ENCODE measurements at regions of chr2 and their contacts with region 1.

Region 1: DNA sequence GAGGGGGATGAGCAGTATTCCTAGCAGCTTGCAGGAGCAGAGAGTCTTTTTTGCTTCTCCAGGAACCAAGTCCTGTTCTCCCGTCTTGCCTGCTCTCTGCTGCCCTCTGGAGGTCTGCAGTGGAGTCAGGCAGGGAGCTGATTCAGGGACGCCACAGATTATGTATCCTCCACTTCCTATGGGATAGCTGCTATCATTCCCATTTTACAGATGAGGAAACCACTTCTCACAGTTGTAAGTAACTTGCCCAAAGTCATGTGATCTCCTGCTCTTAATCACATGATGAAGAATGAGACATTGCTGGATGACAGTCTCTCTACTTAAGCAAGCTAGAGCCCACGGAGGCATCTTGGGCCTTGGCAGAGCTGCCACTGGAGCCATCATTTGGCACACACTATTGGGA is 8.3 kb downstream of the SLC4A5 start:
- DNase-seq: peak; percentile 81
- H3K4me3 Mint-ChIP-seq: no peak overlapping the region
- H3K27ac Mint-ChIP-seq: no peak overlapping the region
- H3K4me1 Mint-ChIP-seq: peaks cover 5% of the 10 kb centered on the region
- H3K27me3 Mint-ChIP-seq: no peaks in the 10 kb centered on the region

Region 2: DNA sequence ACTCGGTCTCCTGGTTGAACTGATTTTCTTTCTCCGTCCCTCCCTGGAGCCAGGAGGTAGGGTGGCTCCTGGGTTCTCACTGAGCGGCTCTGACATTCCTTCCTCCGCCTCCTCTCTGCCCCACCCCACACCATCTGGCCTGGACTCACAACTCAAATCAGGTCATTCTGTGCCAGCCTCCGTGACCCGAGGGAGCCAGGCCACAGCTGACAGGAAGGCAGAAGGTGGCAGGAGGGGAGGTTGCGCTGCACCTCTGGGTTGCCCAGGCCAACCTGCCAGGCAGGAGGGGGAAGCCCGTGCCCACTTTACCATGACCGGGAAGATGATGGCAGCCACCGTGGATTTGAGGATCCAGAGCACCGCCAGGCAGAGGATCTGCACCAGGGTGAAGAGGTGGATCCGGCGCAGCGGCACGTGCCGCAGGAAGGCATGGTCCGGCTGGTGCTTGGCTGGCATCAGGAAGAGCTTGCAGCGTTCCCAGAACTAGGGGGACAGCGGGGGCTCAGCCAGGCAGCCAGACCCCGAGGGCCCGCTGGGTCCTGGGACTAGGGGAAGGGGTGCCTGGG is 108.2 kb before region 1 on chr2:
- CTCF ChIA-PET with region 1: no interaction called
- POLR2A ChIA-PET with region 1: no interaction called
- intact Hi-C with region 1: no loop called
- DNase-seq: no peak
- H3K4me3 Mint-ChIP-seq: no peak overlapping the region
- H3K27ac Mint-ChIP-seq: no peak overlapping the region
- H3K4me1 Mint-ChIP-seq: peaks cover 4% of the 10 kb centered on the region
- H3K27me3 Mint-ChIP-seq: no peaks in the 10 kb centered on the region

Region 3: GRCh38 chr2:74238879-74239278 is 96.1 kb before region 1 on chr2:
- CTCF ChIA-PET with region 1: interaction called, 12 read pairs
- POLR2A ChIA-PET with region 1: no interaction called
- intact Hi-C with region 1: no loop called
- DNase-seq: no peak
- H3K4me3 Mint-ChIP-seq: no peak overlapping the region
- H3K27ac Mint-ChIP-seq: no peak overlapping the region
- H3K4me1 Mint-ChIP-seq: peaks cover 2% of the 10 kb centered on the region
- H3K27me3 Mint-ChIP-seq: no peaks in the 10 kb centered on the region

Region 4: GRCh38 chr2:74267068-74267467 is 67.9 kb before region 1 on chr2:
- CTCF ChIA-PET with region 1: interaction called, 48 read pairs
- POLR2A ChIA-PET with region 1: no interaction called
- intact Hi-C with region 1: loop called (anchors 1 kb)
- DNase-seq: peak; percentile 78
- H3K4me3 Mint-ChIP-seq: peak overlapping the region; percentile 17
- H3K27ac Mint-ChIP-seq: peak overlapping the region; percentile 52
- H3K4me1 Mint-ChIP-seq: peaks cover 9% of the 10 kb centered on the region
- H3K27me3 Mint-ChIP-seq: no peaks in the 10 kb centered on the region

Region 5: DNA sequence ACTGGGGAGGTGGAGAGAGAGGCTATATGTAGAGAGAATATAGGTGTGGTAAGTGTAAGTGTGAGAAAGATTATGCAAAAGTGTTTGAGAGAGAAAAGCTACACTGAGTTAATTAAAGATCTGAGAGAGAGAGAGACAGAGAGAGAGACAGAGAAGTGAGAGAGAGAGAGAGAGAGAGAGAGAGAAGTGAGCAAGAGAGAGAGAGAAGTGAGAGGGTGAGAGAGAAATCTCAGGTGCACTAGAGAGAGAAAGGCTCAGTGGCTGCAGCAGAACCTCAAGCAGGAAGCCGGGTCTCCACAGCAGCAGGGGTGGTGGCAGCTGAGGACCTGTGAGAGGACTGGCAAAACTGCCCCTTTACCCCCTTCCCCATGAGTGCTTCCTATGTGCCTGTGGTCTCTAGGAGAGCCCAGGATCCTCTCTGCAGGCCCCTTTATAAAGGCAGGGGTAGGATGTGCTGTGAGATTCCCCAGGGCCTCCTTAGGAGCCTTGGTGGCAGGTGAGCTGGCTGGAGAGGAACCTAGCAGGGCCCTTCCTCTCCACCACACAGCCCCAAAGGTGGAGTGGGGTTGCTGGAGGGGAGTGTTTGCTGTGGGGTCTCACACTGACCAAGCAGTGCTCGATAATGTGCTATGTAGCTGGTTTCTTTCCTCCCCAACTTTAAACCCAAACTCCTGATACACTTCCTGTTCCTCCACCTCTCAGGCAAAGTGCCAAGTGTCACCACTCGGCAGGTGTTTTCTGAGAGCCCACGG is 44.3 kb before region 1 on chr2:
- CTCF ChIA-PET with region 1: interaction called, 13 read pairs
- POLR2A ChIA-PET with region 1: no interaction called
- intact Hi-C with region 1: no loop called
- DNase-seq: peak; percentile 40
- H3K4me3 Mint-ChIP-seq: no peak overlapping the region
- H3K27ac Mint-ChIP-seq: peak overlapping the region; percentile 64
- H3K4me1 Mint-ChIP-seq: peaks cover 18% of the 10 kb centered on the region
- H3K27me3 Mint-ChIP-seq: no peaks in the 10 kb centered on the region

Region 6: GRCh38 chr2:74345272-74345943 is 10.5 kb after region 1 on chr2:
- CTCF ChIA-PET with region 1: interaction called, 30 read pairs
- POLR2A ChIA-PET with region 1: no interaction called
- intact Hi-C with region 1: no loop called
- DNase-seq: no peak
- H3K4me3 Mint-ChIP-seq: no peak overlapping the region
- H3K27ac Mint-ChIP-seq: no peak overlapping the region
- H3K4me1 Mint-ChIP-seq: no peaks in the 10 kb centered on the region
- H3K27me3 Mint-ChIP-seq: no peaks in the 10 kb centered on the region

Region 7: DNA sequence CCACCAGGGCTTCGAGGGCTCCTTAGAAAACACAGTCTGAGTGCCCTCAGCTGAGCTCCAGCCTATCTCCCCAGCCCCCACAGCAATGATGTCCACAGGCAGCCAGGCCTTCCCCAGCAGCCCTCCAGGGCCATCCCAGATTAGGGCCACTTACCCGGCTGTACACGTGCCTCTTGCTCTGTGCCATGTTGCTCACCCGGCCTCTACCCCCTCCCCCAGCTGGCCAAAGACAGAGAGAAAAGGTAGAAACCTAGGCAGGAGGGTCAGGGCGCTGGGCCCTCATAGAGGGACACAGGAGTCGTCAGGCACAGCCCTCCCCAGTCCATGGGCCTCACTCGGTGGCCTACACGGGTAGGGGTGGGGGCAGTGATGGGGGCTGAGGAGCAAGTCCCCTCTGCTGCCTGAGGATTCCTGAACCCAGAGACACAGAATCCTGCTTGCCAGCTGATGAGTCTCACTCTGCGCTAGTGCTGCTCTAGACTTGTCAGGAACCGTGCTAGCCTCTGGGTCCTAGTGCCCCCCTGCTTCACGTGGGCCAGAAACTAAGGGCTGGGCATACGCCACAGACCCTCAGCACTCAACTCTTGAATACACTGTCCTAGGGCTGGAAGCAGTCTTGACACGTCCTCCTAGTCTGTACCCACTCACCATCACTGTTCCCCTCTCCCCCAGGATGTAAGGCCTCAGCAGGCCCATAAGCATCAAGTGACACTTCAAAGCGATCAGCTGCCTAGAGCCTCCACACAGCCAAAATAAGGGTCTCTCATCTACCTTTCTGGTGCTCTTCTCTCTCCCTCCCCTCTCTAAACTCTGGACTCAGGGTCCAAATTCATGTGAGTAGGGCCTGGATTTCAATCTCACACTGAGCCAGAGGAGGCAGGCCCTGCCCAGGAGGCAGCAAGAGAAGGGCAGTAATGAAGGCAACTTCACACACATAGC is 45.2 kb after region 1 on chr2 and contains the start of gene DCTN1:
- CTCF ChIA-PET with region 1: interaction called, 11 read pairs
- POLR2A ChIA-PET with region 1: no interaction called
- intact Hi-C with region 1: no loop called
- DNase-seq: peak; percentile 23
- H3K4me3 Mint-ChIP-seq: no peak within 1 kb of the TSS
- H3K27ac Mint-ChIP-seq: no peak within 1 kb of the TSS
- H3K4me1 Mint-ChIP-seq: peaks cover 17% of the 10 kb centered on the region
- H3K27me3 Mint-ChIP-seq: no peaks in the 10 kb centered on the region
- total RNA-seq, gene DCTN1: 75.6 to 79.5 TPM

Region 8: GRCh38 chr2:74399785-74400184 is 64.9 kb after region 1 on chr2:
- CTCF ChIA-PET with region 1: interaction called, 11 read pairs
- POLR2A ChIA-PET with region 1: no interaction called
- intact Hi-C with region 1: no loop called
- DNase-seq: no peak
- H3K4me3 Mint-ChIP-seq: no peak overlapping the region
- H3K27ac Mint-ChIP-seq: no peak overlapping the region
- H3K4me1 Mint-ChIP-seq: no peaks in the 10 kb centered on the region
- H3K27me3 Mint-ChIP-seq: peaks cover 2% of the 10 kb centered on the region

Region 9: DNA sequence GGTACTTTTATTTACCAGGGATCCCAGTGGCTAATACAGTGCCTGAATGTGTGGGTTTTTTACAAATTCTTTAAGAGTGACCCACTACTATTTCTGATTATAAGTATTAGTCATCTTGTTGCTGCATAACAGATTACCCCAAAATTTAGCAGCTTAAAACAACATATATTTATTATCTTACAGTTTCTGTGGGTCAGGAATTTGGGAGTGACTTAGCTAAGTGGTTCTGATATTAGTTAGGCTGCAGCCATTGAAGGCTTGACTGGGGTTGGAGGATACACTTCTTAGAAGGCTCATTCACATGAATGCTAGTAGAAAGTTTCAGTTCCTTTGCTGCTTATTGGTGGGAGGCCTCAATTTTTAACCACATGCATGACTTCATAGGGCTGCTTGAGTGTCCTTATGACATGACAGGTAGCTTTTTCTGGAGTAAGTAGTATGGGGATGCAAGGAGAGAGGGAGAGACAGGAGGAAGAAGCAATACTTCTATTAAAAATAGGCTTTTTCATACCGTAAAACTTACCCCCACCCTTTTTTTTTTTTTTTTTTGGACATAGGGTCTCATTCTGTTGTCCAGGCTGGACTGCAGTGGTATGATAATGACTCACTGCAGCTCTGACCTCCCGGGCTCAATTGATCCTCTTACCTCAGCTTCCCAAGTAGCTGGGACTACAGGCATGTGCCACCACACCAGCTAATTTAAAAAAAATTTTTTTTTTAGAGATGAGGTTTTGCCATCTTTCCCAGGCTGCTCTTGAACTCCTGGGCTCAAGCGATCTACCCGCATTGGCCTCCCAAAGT is 610.3 kb after region 1 on chr2:
- CTCF ChIA-PET with region 1: no interaction called
- POLR2A ChIA-PET with region 1: no interaction called
- intact Hi-C with region 1: no loop called
- DNase-seq: no peak
- H3K4me3 Mint-ChIP-seq: no peak overlapping the region
- H3K27ac Mint-ChIP-seq: no peak overlapping the region
- H3K4me1 Mint-ChIP-seq: peaks cover 8% of the 10 kb centered on the region
- H3K27me3 Mint-ChIP-seq: no peaks in the 10 kb centered on the region

Measured in activated CD4-positive, alpha-beta memory T cell treated with anti-CD3 and anti-CD28 coated beads for 36 hours (primary cell).